ENCODE measurements at regions of chr4 and their contacts with region 1.

Region 1: DNA sequence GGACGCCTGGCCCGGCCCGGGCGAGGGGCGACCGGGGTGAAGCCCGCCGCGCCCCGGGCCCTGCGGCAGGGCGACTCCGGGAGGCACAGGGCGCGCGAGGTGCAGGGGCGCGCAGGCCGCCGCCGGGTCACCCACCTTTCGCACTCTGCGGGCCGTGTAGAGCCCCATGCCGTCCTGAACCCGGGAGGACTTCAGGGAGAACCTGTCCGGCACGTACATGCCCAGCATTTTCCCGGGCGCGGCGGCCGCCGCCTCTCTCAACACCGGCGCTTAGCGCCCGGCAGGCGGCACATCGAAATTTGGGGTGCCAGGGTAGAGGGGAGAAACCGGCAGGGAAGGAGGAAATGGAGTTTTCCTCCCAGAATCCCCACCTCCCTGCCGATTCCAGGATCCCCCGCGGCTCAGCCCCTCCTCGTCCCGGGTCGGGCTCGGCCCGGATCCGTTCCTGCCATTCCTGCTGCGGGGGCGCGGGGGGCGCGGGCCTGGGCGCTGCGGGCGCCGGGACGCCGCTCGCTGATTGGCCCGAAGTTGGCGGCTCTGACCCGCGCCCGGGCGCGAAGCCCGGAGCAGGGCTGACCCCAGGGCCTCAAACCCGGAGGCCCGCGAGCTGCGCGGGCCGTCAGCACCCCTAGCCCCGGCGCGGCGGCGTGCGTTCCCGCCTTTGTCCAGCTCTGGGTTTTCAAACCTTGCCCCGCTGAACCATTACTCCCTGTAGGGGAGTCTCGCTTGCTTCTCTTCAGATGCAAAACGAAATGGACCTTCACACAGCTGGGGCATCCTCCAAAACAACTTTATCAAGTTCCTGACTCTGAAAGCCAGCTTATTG is at the start of gene PRDM5:
- DNase-seq: peak; percentile 57 to 72
- ATAC-seq: peak; percentile 76 to 88 (median 83)
- H3K4me3 ChIP-seq: peak within 1 kb of the TSS; percentile 52 to 82 (median 80)
- H3K27ac ChIP-seq: peak within 1 kb of the TSS; percentile 93 to 99 (median 96)
- H3K4me1 ChIP-seq: peaks cover 0 to 49% (median 35%) of the 10 kb centered on the region in 9 donors
- H3K27me3 ChIP-seq: peaks cover 0 to 29% (median 0%) of the 10 kb centered on the region in 7 donors
- CTCF ChIP-seq: peak in 5 of 9 donors; percentile 11 to 37 (median 28)
- total RNA-seq, gene PRDM5: 6.4 to 20.5 (median 15.2) TPM

Region 2: GRCh38 chr4:120718979-120719566 is 203.5 kb before region 1 on chr4:
- intact Hi-C with region 1: loop called in 8 of 10 experiments (anchors 5 to 10 kb)
- DNase-seq: peak in 1 of 2 donors; percentile 33
- ATAC-seq: peak; percentile 79 to 96 (median 89)
- H3K4me3 ChIP-seq: peak overlapping the region in 1 of 10 donors; percentile 14
- H3K27ac ChIP-seq: no peak overlapping the region
- H3K4me1 ChIP-seq: peaks cover 0 to 18% (median 5%) of the 10 kb centered on the region in 9 donors
- H3K27me3 ChIP-seq: no peaks in the 10 kb centered on the region
- CTCF ChIP-seq: peak; percentile 40 to 76 (median 72)

Region 3: GRCh38 chr4:120948382-120948781 is 25.8 kb after region 1 on chr4:
- intact Hi-C with region 1: no loop called
- DNase-seq: no peak
- ATAC-seq: no peak
- H3K4me3 ChIP-seq: no peak overlapping the region
- H3K27ac ChIP-seq: no peak overlapping the region
- H3K4me1 ChIP-seq: no peaks in the 10 kb centered on the region
- H3K27me3 ChIP-seq: no peaks in the 10 kb centered on the region
- CTCF ChIP-seq: no peak

Region 4: DNA sequence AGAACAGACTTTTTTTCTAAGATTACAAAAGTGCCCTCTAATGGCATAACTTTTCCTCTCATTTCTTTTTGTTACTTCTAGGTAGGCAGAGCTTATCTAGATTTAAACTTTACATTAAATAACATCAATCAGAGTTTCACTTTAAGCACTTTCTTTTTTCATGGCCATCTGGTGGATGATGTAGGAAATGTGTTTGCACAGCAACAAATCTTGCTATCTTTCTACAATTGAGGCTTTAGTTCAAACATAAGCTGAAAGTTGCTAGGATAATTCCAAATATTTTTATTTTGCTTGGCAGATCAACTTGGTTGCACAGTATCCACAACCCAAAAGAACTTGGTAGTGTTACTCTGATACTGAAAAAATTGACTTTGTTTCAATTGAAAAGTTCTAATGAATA is 127.7 kb after region 1 on chr4:
- intact Hi-C with region 1: loop called in 2 of 10 experiments (anchors 10 kb)
- DNase-seq: no peak
- ATAC-seq: peak in 1 of 8 donors; percentile 12
- H3K4me3 ChIP-seq: no peak overlapping the region
- H3K27ac ChIP-seq: no peak overlapping the region
- H3K4me1 ChIP-seq: peaks cover 0 to 37% (median 3%) of the 10 kb centered on the region in 9 donors
- H3K27me3 ChIP-seq: no peaks in the 10 kb centered on the region
- CTCF ChIP-seq: peak in 8 of 9 donors; percentile 10 to 56 (median 39)

Region 5: DNA sequence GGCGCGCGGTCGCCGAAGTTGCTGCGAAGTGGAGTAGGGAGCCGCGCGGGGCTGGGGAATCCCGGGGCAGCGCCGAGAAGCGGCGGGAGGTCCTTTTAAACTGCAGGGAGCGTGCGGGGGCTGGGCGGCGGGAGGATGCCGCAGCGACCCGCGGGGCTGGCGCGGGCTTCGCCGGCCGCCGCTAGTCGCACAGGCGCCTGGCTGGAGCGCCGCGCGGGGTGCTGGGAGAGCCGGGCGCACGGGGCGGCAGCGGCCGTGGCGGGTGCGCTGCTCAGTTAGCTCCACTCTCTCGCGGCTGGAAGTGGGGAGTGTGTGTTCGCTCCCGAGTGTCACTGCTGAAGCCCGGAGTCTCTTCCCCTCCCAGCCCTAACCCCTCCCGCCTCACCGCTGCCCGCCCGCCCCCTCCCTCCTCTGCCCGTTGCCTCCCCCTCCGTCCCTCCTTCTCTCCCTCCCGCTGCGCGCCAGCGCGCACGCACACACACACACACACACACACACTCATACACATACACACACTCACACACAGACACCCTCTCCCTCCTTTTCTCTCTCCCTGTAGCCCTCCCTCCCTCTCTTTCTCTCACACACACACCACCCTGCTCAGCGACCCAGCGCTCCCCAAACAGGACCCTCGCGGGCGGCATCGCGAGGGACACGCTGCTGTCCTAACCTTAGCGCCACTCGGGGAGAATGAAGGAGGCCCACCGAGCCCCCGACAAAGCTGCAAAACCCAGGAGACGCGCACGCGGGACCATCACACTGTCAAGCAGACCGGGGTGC is 149.8 kb after region 1 on chr4 and contains the start of gene NDNF:
- intact Hi-C with region 1: loop called in 3 of 10 experiments (anchors 5 to 10 kb)
- DNase-seq: peak; percentile 44 to 46
- ATAC-seq: peak; percentile 64 to 86 (median 72)
- H3K4me3 ChIP-seq: peak within 1 kb of the TSS; percentile 47 to 72 (median 62)
- H3K27ac ChIP-seq: peak within 1 kb of the TSS; percentile 23 to 86 (median 74)
- H3K4me1 ChIP-seq: peaks cover 0 to 25% (median 18%) of the 10 kb centered on the region in 9 donors
- H3K27me3 ChIP-seq: peaks cover 0 to 83% (median 13%) of the 10 kb centered on the region in 7 donors
- CTCF ChIP-seq: no peak
- total RNA-seq, gene NDNF: 3.4 to 17.9 (median 7.3) TPM